Transverse colon (tissue), 4 donors: ENCODE measurements at regions of chr4 and their contacts with region 1.

Region 1: GRCh38 chr4:56435306-56435926 is at the start of gene PPAT:
- DNase-seq: peak; percentile 99
- H3K4me3 ChIP-seq: peak within 1 kb of the TSS; percentile 54 to 70 (median 61)
- H3K27ac ChIP-seq: peak within 1 kb of the TSS; percentile 91 to 99 (median 94)
- H3K4me1 ChIP-seq: peaks cover 0 to 24% (median 9%) of the 10 kb centered on the region in 4 donors
- H3K27me3 ChIP-seq: no peaks in the 10 kb centered on the region
- CTCF ChIP-seq: peak; percentile 28 to 73 (median 45)
- EP300 ChIP-seq: no peak
- POLR2A ChIP-seq: peak; percentile 49
- total RNA-seq, gene PPAT: 0.75 to 12.1 (median 4.5) TPM

Region 2: DNA sequence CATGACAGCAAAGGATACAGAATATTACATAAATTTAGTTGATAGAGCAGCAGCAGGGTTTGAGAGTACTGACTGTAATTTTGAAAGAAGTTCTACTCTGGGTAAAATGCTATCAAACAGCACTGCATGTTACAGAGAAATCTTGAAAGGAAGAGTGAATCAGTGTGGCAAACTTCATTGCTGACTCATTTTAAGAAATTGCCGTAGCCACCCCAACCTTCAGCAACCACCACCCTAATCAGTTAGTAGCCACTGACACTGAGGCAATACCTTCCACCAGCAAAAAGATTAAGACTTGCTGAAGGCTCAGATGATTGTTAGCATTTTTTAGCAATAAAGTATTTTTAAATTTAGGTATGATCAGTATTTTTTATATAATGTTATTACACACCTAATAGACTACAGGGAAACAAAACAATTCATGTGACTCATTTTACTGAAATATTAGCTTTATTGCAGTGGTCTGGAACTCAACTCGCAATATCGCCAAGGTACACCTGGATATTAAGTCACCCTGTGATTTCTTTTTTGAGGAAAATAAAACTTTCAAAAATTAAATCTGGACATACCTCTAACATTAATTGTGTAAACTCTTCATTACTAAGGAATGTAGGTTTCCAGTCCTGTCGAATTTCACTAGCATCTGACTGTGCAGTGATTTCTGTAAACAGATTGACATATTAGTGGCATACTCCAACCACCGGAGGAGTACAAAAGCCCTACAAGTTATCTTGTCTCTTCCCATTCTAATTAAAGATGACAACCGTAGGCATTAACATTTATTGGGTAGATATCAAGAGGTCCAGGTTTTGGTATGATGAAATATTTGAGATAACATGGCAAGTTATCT is 959.8 kb before region 1 on chr4:
- in situ Hi-C with region 1: no loop called
- intact Hi-C with region 1: loop called (anchors 10 kb)
- DNase-seq: no peak
- H3K4me3 ChIP-seq: no peak overlapping the region
- H3K27ac ChIP-seq: no peak overlapping the region
- H3K4me1 ChIP-seq: no peaks in the 10 kb centered on the region
- H3K27me3 ChIP-seq: no peaks in the 10 kb centered on the region
- CTCF ChIP-seq: no peak
- EP300 ChIP-seq: no peak
- POLR2A ChIP-seq: no peak

Region 3: GRCh38 chr4:56530269-56531148 is 95.1 kb after region 1 on chr4:
- in situ Hi-C with region 1: no loop called
- intact Hi-C with region 1: loop called (anchors 10 kb)
- DNase-seq: peak; percentile 90
- H3K4me3 ChIP-seq: peak overlapping the region; percentile 36 to 70 (median 38)
- H3K27ac ChIP-seq: peak overlapping the region in 3 of 4 donors; percentile 41 to 62 (median 47)
- H3K4me1 ChIP-seq: peaks cover 0 to 16% (median 8%) of the 10 kb centered on the region in 4 donors
- H3K27me3 ChIP-seq: peaks cover 38% of the 10 kb centered on the region
- CTCF ChIP-seq: no peak
- EP300 ChIP-seq: no peak
- POLR2A ChIP-seq: no peak